ENCODE measurements at regions of chr1 and their contacts with region 1.

Region 1: DNA sequence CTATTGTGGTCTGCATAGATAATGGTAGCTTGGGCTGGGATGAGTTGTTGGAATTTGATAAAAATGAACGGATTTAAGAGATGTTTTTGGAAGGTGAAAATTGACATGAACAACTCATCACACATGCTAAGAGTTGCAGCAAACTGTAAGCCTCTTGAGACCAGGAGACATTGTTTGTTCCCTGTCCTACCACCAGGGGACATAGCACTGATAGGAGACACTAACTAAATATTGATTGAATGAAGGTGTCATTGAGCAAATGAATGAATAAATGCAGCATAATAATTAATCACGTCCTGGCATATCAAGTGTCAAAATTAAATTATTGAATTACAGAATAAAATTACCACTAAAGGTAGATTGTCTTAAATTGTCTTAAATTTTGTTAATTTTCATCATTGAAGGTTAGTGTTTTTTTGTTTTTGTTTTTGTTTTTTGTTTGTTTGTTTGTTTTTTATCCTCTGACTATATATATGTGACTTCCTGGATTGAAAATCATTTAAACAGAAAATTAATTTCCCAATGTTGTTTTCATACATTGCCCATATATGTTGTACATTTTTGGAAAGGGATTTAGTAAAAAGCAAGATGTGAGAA is 285.3 kb upstream of the C1orf105 start:
- DNase-seq: no peak
- H3K4me3 ChIP-seq: no peak overlapping the region
- H3K27ac ChIP-seq: no peak overlapping the region
- H3K4me1 ChIP-seq: no peaks in the 10 kb centered on the region
- H3K27me3 ChIP-seq: no peaks in the 10 kb centered on the region
- CTCF ChIP-seq: peak; percentile 65

Region 2: DNA sequence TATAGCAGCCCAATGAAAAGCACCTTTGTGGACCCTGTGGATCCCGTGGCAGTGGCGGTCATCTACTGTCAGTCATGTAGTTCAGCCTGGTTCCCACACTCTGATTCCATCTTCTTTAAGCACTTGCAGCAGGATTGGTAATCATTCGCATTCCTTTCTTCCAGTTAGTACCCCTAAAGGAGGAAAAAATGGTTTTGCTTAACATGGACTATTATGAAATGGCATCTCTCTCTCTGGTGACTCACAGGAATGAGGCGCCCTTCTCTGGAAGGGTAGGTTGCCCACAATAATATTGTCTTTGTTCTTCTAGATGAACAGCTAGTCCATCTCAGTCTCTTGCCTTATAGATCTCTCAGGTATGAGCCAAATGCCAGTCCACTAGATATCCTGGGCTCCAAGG is 1327.7 kb before region 1 on chr1:
- CTCF ChIA-PET with region 1: no interaction called
- POLR2A ChIA-PET with region 1: no interaction called
- intact Hi-C with region 1: no loop called
- DNase-seq: no peak
- H3K4me3 ChIP-seq: no peak overlapping the region
- H3K27ac ChIP-seq: no peak overlapping the region
- H3K4me1 ChIP-seq: no peaks in the 10 kb centered on the region
- H3K27me3 ChIP-seq: no peaks in the 10 kb centered on the region
- CTCF ChIP-seq: no peak

Region 3: GRCh38 chr1:172054172-172054571 is 81.0 kb before region 1 on chr1:
- CTCF ChIA-PET with region 1: no interaction called
- POLR2A ChIA-PET with region 1: no interaction called
- intact Hi-C with region 1: no loop called
- DNase-seq: no peak
- H3K4me3 ChIP-seq: no peak overlapping the region
- H3K27ac ChIP-seq: no peak overlapping the region
- H3K4me1 ChIP-seq: no peaks in the 10 kb centered on the region
- H3K27me3 ChIP-seq: no peaks in the 10 kb centered on the region
- CTCF ChIP-seq: no peak

Region 4: GRCh38 chr1:172089768-172090510 is 45.2 kb before region 1 on chr1:
- CTCF ChIA-PET with region 1: no interaction called
- POLR2A ChIA-PET with region 1: no interaction called
- intact Hi-C with region 1: no loop called
- DNase-seq: peak in 1 of 2 experiments; percentile 3
- H3K4me3 ChIP-seq: no peak overlapping the region
- H3K27ac ChIP-seq: no peak overlapping the region
- H3K4me1 ChIP-seq: no peaks in the 10 kb centered on the region
- H3K27me3 ChIP-seq: no peaks in the 10 kb centered on the region
- CTCF ChIP-seq: peak; percentile 49

Region 5: GRCh38 chr1:172357753-172358385 is 222.7 kb after region 1 on chr1:
- CTCF ChIA-PET with region 1: interaction called, 3 read pairs
- POLR2A ChIA-PET with region 1: no interaction called
- intact Hi-C with region 1: loop called (anchors 5 kb)
- DNase-seq: no peak
- H3K4me3 ChIP-seq: no peak overlapping the region
- H3K27ac ChIP-seq: peak overlapping the region; percentile 72
- H3K4me1 ChIP-seq: peaks cover 60% of the 10 kb centered on the region
- H3K27me3 ChIP-seq: no peaks in the 10 kb centered on the region
- CTCF ChIP-seq: no peak